Cardiac septum (tissue), 1 donor: ENCODE measurements at regions of chr15 and their contacts with region 1.

Region 1: DNA sequence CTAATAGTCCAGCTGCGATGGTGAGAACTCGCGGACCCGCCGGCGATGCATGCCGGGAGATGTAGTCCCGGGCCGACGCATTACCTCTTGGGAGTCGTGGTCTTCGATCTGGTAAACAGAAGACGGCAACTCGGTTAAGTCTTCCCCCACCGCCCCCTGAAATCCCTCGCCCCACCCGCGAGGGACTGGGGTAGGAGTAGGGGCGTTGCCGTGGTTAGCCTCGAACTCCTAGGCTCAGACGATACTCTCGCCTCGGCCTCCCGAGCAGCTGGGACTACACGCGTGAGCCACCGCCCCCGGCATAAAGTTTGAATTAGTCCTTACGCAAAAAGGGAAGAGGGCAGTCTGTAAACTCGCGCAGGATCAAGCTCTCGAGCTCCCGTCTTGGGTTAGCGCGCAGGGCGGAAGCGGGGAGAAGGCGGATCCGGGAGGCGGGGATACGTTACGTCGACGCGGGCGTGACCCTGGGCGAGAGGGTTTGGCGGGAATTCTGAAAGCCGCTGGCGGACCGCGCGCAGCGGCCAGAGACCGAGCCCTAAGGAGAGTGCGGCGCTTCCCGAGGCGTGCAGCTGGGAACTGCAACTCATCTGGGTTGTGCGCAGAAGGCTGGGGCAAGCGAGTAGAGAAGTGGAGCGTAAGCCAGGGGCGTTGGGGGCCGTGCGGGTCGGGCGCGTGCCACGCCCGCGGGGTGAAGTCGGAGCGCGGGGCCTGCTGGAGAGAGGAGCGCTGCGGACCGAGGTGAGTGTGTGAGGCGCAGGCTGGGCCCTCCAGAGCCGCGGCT is at the start of gene RAD51:
- DNase-seq: peak; percentile 98
- total RNA-seq, gene RAD51: 0.51 TPM

Region 2: GRCh38 chr15:40593588-40594428 is 101.1 kb before region 1 on chr15 and contains the start of gene KNL1:
- intact Hi-C with region 1: loop called (anchors 5 kb)
- DNase-seq: peak; percentile 96
- total RNA-seq, gene KNL1: 0.43 TPM

Region 3: GRCh38 chr15:40754883-40755811 is 60.3 kb after region 1 on chr15 and contains the start of gene RMDN3:
- intact Hi-C with region 1: loop called (anchors 5 kb)
- DNase-seq: peak; percentile 96
- total RNA-seq, gene RMDN3: 21.1 TPM

Region 4: DNA sequence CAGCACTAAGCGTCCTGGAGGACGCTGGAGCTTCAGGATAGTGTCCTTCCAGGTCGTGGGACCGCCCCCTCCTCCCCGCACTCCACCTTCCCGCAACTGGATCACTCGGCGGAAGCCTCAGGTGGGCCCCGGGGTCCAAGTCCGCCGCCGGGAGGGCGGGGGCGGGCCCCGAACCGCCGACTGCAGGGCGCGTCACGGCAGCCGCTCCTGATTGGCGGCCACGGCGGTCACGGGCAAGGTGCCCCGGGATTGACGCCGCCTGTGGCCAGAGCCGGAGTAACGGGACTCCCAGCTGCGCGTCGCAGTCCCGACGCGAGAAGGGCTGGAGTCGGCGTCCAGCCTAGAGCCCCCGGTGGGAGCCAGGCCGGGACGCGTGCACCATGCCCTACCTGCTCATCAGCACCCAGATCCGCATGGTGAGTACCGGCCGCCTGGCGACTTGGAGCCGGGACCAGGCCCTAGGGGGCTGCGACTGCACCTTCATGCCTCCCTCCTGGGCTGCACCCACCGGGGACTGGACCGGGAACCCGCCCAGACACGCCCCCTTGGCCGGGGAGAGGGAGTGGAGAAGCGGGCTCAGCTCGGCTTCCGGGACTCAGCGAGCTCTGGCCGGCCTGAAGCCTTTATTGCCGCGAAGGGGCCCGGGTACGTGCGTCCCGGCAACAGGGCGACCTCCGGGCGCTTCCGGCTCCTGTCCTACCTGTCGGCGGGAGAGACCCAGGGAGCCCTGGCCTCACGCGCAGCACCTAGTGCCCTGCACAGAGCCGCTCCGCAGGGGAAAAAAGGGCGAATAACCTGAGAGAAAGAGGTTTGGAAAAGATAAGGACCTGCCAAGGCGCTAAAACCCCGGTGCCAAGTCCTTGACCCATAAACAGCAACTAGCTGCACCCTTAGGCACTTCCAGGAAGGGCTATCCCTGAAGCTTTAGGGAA is 69.2 kb after region 1 on chr15 and contains the start of gene GCHFR:
- intact Hi-C with region 1: loop called (anchors 5 kb)
- DNase-seq: peak; percentile 84
- total RNA-seq, gene GCHFR: 1.6 TPM

Region 5: DNA sequence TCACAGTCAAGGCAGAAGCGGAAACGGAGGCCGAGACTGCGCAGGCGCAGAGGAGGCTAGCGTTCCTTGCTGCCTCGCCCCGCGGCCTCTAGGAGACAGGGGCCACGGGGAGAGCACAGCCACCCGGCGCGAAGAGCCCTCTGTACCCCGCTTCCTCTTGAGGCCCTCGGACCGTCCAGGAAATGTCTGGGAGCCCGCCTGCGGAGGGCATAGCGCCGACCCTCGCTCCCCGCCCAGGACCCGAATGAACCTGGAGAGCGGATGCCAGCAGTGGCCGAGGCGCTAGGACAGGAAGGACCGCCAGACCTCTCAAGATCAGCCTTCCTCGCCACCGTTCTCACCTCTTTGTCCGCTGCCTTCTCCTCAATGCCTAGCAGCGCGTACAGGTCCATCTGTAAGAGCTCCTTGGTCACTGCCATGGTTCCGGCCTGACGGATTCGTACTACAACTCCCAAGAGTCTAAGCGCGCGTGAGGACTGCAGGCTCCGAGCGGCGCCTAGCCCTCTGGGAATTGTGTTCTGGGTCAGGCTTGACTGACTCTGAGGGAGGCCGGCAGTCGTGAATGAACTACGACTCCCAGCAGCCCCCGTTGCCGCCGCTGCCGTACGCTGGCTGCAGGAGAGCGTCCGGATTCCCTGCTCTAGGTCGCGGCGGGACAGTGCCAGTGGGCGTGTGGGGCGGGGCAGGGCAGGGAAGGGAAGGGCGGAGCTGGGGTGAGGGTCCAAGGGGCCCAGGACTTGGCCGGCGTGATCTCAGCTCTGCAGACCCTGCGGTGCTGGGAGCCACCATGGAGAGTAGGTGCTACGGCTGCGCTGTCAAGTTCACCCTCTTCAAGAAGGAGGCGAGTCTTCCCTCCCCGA is 112.4 kb after region 1 on chr15 and contains the starts of genes DNAJC17 and ZFYVE19:
- intact Hi-C with region 1: loop called (anchors 5 kb)
- DNase-seq: peak; percentile 99
- total RNA-seq, gene DNAJC17: 19.1 TPM
- total RNA-seq, gene ZFYVE19: 11.0 TPM